Activated CD4-positive, alpha-beta memory T cell treated with anti-CD3 and anti-CD28 coated beads for 36 hours (primary cell): ENCODE measurements at regions of chr22 and their contacts with region 1.

Region 1: DNA sequence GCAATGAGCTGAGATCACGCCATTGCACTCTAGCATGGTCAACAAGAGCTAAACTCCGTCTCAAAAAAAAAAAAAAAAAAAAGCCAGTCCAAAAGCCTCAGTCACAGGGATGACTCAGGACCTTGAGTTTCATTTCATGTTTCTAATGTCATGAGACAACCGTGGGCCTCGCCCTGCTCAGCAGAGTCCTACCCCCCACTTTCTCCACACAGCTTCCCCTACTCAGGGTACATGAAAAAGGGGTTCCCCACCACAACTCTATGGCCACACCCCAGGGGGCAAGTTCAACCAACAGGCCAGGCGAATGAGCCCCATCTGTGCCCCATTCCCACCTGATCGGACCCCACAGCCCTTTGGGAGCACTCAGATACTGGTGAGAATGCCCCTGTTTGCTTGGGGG is 24.3 kb upstream of the ADA2 start:
- DNase-seq: peak; percentile 53
- H3K4me3 Mint-ChIP-seq: no peak overlapping the region
- H3K27ac Mint-ChIP-seq: peak overlapping the region; percentile 74
- H3K4me1 Mint-ChIP-seq: peaks cover 8% of the 10 kb centered on the region
- H3K27me3 Mint-ChIP-seq: no peaks in the 10 kb centered on the region

Region 2: DNA sequence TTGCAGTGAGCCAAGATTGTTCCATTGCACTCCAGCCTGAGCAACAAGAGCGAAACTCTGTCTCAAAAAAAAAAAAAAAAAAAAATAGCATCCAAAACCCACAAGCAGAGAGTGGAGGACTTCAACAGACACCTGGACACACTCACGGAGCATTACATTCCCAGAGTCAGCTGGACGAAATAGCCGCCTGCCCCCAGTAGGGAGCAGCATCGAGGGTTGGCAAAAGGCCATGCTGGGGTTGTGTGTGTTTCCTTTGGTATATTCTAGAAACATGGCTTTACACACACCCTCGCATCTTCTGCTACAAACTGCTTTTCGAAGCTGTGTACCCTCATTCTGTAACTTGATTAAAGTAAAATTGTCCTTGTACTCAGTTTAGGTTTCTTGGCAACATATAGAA is 29.5 kb before region 1 on chr22:
- CTCF ChIA-PET with region 1: no interaction called
- POLR2A ChIA-PET with region 1: no interaction called
- intact Hi-C with region 1: no loop called
- DNase-seq: peak; percentile 66
- H3K4me3 Mint-ChIP-seq: no peak overlapping the region
- H3K27ac Mint-ChIP-seq: no peak overlapping the region
- H3K4me1 Mint-ChIP-seq: peaks cover 35% of the 10 kb centered on the region
- H3K27me3 Mint-ChIP-seq: no peaks in the 10 kb centered on the region

Region 3: DNA sequence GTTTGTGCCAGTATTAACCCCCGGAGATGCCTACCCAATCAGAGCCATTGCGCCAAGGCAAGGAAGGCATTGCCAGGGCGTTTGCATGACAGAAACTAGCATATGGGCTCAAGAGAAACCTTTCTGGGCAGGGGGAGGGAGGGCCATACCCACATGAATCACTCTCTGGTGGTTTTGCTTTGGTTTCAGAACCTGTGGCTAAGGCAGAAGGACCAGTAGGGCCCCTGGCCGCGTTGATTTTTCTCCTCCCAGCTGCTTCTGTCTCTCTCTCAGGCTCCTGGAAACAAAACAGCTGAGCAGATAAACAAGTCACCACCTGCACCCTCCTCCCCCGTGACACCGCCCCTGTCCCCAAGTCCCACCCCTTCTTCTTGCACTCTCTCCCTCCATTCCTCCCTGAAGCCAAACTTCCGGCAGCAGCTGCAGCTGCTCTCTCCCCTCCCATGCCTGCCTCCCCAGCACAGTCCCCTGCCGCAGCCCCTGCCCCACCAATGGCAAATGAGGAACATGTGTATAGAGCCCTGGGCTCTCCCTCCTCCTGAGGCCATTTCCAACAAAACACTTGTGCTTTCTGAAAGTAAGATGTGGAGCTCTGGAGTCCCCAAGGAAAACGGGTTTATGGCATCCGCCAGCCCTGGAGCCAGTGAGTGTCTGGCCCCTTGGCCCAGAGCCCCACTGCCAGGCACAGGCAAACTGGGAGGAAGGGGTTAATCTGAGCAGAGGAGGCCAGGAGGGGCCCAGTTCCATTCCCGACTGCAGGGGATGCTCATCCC is 14.7 kb after region 1 on chr22:
- CTCF ChIA-PET with region 1: no interaction called
- POLR2A ChIA-PET with region 1: no interaction called
- intact Hi-C with region 1: loop called (anchors 2 kb)
- DNase-seq: peak; percentile 84
- H3K4me3 Mint-ChIP-seq: no peak overlapping the region
- H3K27ac Mint-ChIP-seq: peak overlapping the region; percentile 45
- H3K4me1 Mint-ChIP-seq: peaks cover 19% of the 10 kb centered on the region
- H3K27me3 Mint-ChIP-seq: no peaks in the 10 kb centered on the region